ENCODE measurements at regions of chr11 and their contacts with region 1.

Region 1: DNA sequence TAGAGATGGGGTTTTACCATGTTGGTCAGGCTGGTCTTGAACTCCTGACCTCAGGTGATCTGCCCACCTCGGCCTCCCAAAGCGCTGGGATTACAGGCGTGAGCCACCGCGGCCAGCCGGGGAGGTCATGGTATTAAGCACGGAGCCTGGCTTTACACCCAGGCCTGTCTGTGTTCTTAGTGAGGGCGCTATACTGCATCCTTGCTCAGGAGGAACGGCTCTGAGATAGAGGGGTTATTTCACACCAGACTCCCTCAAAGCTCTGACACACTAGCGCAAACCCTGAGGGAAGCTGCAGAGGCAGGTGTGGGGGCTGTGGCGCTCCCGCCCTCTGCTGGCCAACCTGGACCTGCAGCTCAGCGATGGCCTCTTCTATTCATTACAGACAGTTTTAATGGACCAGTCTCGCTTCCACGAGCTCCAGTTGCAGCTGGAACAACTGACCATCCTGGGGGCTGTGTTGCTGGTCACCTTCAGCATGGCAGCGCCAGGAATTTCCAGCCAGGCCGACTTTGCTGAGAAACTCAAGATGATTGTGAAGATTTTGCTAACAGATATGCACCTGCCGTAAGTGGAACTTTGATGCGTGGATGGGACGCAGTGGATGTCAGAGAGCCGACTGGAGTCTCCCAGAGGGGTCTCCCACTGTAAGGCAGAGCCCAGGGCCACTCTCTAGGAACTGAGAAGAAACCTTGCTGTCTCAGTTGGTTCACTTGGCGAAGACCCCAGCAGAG is 26.2 kb downstream of the TCP11L1 start:
- ATAC-seq: peak; percentile 46 to 99 (median 76)
- H3K4me3 ChIP-seq: no peak overlapping the region
- H3K27ac ChIP-seq: no peak overlapping the region
- H3K4me1 ChIP-seq: no peaks in the 10 kb centered on the region

Region 2: GRCh38 chr11:32426819-32427615 is 638.6 kb before region 1 on chr11:
- in situ Hi-C with region 1: no loop called
- ATAC-seq: peak in 5 of 8 experiments; percentile 92 to 96 (median 95)
- H3K4me3 ChIP-seq: peak overlapping the region; percentile 1 to 26 (median 17)
- H3K27ac ChIP-seq: no peak overlapping the region
- H3K4me1 ChIP-seq: peaks cover 0 to 11% of the 10 kb centered on the region in 2 donors

Region 3: GRCh38 chr11:32809313-32809712 is 256.3 kb before region 1 on chr11:
- in situ Hi-C with region 1: loop called in 3 of 9 experiments (anchors 25 kb)
- ATAC-seq: peak; percentile 69 to 100 (median 90)
- H3K4me3 ChIP-seq: no peak overlapping the region
- H3K27ac ChIP-seq: no peak overlapping the region
- H3K4me1 ChIP-seq: no peaks in the 10 kb centered on the region

Region 4: DNA sequence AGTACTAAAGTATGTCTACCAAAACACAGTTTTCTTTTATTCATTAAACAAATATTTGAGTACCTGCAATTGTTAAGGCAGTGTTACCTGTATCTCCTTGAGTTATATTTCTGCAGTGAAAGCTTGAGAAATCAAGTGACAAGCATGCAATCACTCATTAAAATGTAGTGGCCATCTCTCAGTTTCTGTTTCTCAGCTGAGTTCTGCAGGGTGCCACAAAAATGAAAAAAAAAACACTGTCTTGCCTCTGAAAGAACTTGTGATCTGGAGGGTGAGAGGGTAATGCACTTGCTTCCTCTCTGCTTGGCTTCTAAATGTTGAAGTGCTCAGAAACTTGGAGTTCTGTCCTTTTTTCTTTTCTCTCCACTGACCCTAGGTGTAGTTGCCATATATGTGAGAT is 166.2 kb before region 1 on chr11:
- in situ Hi-C with region 1: no loop called
- ATAC-seq: no peak
- H3K4me3 ChIP-seq: no peak overlapping the region
- H3K27ac ChIP-seq: no peak overlapping the region
- H3K4me1 ChIP-seq: peaks cover 4 to 10% of the 10 kb centered on the region in 2 donors

Region 5: GRCh38 chr11:32960553-32961164 is 105.0 kb before region 1 on chr11:
- in situ Hi-C with region 1: loop called in 2 of 9 experiments (anchors 25 kb)
- ATAC-seq: peak in 3 of 8 experiments; percentile 19 to 30 (median 25)
- H3K4me3 ChIP-seq: no peak overlapping the region
- H3K27ac ChIP-seq: no peak overlapping the region
- H3K4me1 ChIP-seq: no peaks in the 10 kb centered on the region

Region 6: GRCh38 chr11:33172996-33173395 is 107.4 kb after region 1 on chr11:
- in situ Hi-C with region 1: no loop called
- ATAC-seq: peak in 1 of 8 experiments; percentile 59
- H3K4me3 ChIP-seq: no peak overlapping the region
- H3K27ac ChIP-seq: no peak overlapping the region
- H3K4me1 ChIP-seq: no peaks in the 10 kb centered on the region